Ascending aorta (tissue), 2 donors: ENCODE measurements at regions of chr1 and their contacts with region 1.

Region 1: GRCh38 chr1:234918181-234918841 is 210.3 kb downstream of the TOMM20 start:
- DNase-seq: peak in 1 of 2 donors; percentile 75
- H3K4me3 ChIP-seq: no peak overlapping the region
- H3K27ac ChIP-seq: peak overlapping the region; percentile 86 to 94
- H3K4me1 ChIP-seq: peaks cover 28 to 77% of the 10 kb centered on the region in 2 donors
- H3K27me3 ChIP-seq: no peaks in the 10 kb centered on the region
- CTCF ChIP-seq: no peak

Region 2: GRCh38 chr1:234970731-234971476 is 52.6 kb after region 1 on chr1:
- intact Hi-C with region 1: loop called (anchors 2 kb)
- DNase-seq: peak in 1 of 2 donors; percentile 90
- H3K4me3 ChIP-seq: peak overlapping the region in 1 of 2 donors; percentile 46
- H3K27ac ChIP-seq: peak overlapping the region; percentile 80 to 89
- H3K4me1 ChIP-seq: peaks cover 19 to 32% of the 10 kb centered on the region in 2 donors
- H3K27me3 ChIP-seq: no peaks in the 10 kb centered on the region
- CTCF ChIP-seq: no peak

Region 3: GRCh38 chr1:234980645-234981396 is 62.5 kb after region 1 on chr1:
- intact Hi-C with region 1: loop called (anchors 2 kb)
- DNase-seq: peak; percentile 91 to 98
- H3K4me3 ChIP-seq: peak overlapping the region in 1 of 2 donors; percentile 44
- H3K27ac ChIP-seq: peak overlapping the region; percentile 98 to 99
- H3K4me1 ChIP-seq: peaks cover 24 to 65% of the 10 kb centered on the region in 2 donors
- H3K27me3 ChIP-seq: no peaks in the 10 kb centered on the region
- CTCF ChIP-seq: no peak